ENCODE measurements at regions of chr5 and their contacts with region 1.

Region 1: DNA sequence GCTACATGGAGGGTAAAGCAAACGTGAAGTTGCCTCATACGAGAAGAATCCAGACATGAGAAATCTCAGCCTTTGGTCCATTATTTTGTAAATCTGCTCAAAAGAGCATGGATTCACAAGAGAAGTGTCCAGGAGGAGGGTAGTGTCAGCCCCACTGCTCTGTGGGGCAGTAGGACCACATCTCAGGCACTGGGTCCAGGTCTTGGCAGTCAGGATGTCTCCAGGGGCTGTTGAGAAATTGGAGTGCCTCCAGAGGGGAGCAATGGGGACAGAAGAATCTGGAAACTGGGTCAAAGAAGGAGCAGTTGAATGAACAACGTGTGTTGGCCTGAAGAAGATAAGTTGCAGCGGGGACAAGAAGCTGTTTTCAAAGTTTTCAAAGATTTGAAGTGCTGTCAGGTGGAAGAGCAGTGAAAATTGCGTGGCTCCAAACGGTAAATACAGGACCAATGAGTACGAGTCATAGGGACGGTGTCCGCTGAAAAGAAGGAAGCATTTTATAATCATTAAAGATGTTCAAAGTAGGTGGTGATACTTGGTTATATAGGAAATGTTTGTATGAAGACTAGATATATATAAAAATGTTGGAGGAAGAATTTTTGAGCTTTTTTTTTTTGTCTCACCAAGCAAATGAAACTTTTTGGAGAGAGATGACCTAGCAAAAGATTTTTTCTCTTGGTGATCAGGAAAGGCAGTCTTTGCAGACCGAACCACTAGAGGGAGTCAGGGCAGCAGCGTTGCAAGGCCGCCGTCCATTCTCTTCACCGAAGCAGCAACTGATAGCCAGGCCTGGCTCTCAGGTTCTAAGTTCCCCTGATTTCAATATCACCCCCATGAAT is 57.1 kb upstream of the ZBED3 start:
- DNase-seq: peak; percentile 50
- CTCF ChIP-seq: peak; percentile 85

Region 2: DNA sequence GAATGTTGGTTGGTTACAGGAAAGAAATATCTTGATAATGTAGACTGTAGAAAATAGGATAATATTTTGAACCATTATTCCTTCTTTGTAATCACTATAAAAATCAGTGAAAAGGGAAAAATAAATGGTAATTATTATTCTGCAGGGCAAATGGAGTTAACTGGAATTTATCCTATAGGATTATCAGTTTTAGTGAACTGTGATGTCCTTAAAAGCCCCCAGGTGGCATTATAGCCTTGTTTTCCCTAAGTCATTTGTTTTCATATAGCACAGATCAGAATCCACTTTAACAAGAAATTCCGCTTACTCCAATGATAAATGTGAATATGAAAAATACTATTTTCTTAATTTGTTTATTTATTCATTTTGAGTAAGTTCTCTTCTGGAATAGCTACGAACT is 374.1 kb after region 1 on chr5:
- in situ Hi-C with region 1: loop called (anchors 25 kb)
- DNase-seq: no peak
- CTCF ChIP-seq: no peak

Region 3: GRCh38 chr5:78447775-78448424 is 1303.7 kb after region 1 on chr5:
- in situ Hi-C with region 1: no loop called
- DNase-seq: no peak
- CTCF ChIP-seq: no peak